Ovary (tissue), 10 donors: ENCODE measurements at regions of chr2 and their contacts with region 1.

Region 1: GRCh38 chr2:207625018-207625907 is at the start of gene METTL21A:
- DNase-seq: peak; percentile 84 to 90 (median 88)
- H3K4me3 ChIP-seq: peak within 1 kb of the TSS; percentile 73
- H3K27ac ChIP-seq: peak within 1 kb of the TSS; percentile 72 to 82
- H3K4me1 ChIP-seq: peaks cover 4% of the 10 kb centered on the region
- H3K27me3 ChIP-seq: no peaks in the 10 kb centered on the region
- CTCF ChIP-seq: peak in 2 of 3 donors; percentile 31 to 65
- EP300 ChIP-seq: no peak
- POLR2A ChIP-seq: peak; percentile 54
- total RNA-seq, gene METTL21A: 8.3 to 32.9 (median 11.2) TPM

Region 2: GRCh38 chr2:207710814-207711740 is 85.8 kb after region 1 on chr2 and contains the start of gene CCNYL1:
- intact Hi-C with region 1: loop called in 1 of 4 experiments (anchors 1 kb)
- DNase-seq: peak; percentile 99
- H3K4me3 ChIP-seq: peak within 1 kb of the TSS; percentile 97
- H3K27ac ChIP-seq: peak within 1 kb of the TSS in 1 of 2 donors; percentile 37
- H3K4me1 ChIP-seq: peaks cover 3% of the 10 kb centered on the region
- H3K27me3 ChIP-seq: no peaks in the 10 kb centered on the region
- CTCF ChIP-seq: peak; percentile 26 to 75 (median 66)
- EP300 ChIP-seq: no peak
- POLR2A ChIP-seq: peak; percentile 72
- total RNA-seq, gene CCNYL1: 5.4 to 13.0 (median 7.4) TPM